Esophagus muscularis mucosa (tissue), 4 donors: ENCODE measurements at regions of chr6 and their contacts with region 1.

Region 1: GRCh38 chr6:31795616-31796298 is at the start of gene VARS1:
- DNase-seq: peak; percentile 95
- H3K4me3 ChIP-seq: peak within 1 kb of the TSS; percentile 92 to 93 (median 93)
- H3K27ac ChIP-seq: peak within 1 kb of the TSS; percentile 92 to 99 (median 95)
- H3K4me1 ChIP-seq: peaks cover 13 to 34% (median 29%) of the 10 kb centered on the region in 4 donors
- H3K27me3 ChIP-seq: no peaks in the 10 kb centered on the region
- CTCF ChIP-seq: peak; percentile 81 to 93 (median 87)
- EP300 ChIP-seq: no peak
- POLR2A ChIP-seq: no peak
- total RNA-seq, gene VARS1: 25.0 to 53.2 (median 34.8) TPM

Region 2: GRCh38 chr6:31597006-31597405 is 198.8 kb before region 1 on chr6:
- intact Hi-C with region 1: no loop called
- DNase-seq: no peak
- H3K4me3 ChIP-seq: no peak overlapping the region
- H3K27ac ChIP-seq: no peak overlapping the region
- H3K4me1 ChIP-seq: peaks cover 0 to 5% (median 0%) of the 10 kb centered on the region in 4 donors
- H3K27me3 ChIP-seq: no peaks in the 10 kb centered on the region
- CTCF ChIP-seq: peak in 2 of 3 experiments; percentile 20 to 23
- EP300 ChIP-seq: no peak
- POLR2A ChIP-seq: no peak

Region 3: DNA sequence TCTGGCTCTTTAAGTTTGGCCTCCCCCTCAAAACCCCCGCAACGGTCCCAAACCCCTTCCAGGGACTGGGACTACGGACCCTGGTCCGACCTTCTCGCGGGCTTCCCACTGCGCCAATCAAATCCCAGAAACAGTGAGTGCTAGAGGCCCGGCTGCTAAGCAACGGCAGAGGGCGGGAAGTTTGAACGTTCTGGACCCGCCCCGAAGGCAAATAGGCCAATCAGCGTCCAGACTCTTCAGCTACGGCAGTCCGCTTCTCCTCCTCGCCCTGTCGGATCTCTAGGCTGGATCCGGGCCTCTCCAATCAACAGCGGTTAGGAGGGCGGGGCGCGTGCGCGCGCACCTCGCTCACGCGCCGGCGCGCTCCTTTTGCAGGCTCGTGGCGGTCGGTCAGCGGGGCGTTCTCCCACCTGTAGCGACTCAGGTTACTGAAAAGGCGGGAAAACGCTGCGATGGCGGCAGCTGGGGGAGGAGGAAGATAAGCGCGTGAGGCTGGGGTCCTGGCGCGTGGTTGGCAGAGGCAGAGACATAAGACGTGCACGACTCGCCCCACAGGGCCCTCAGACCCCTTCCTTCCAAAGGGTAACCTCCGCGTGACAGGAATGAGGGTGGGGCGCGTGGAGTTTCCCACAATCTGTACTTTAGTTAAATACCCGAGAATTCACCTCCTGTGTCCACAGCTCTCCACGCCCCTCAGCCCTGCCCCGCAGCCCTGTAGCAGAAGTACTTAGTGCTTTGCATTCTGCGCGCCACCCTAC is 55.9 kb before region 1 on chr6 and contains the start of gene MSH5:
- intact Hi-C with region 1: loop called (anchors 5 kb)
- DNase-seq: peak; percentile 100
- H3K4me3 ChIP-seq: peak within 1 kb of the TSS; percentile 69 to 78 (median 73)
- H3K27ac ChIP-seq: peak within 1 kb of the TSS; percentile 48 to 90 (median 78)
- H3K4me1 ChIP-seq: peaks cover 29 to 47% (median 43%) of the 10 kb centered on the region in 4 donors
- H3K27me3 ChIP-seq: no peaks in the 10 kb centered on the region
- CTCF ChIP-seq: peak in 1 of 3 experiments; percentile 12
- EP300 ChIP-seq: no peak
- POLR2A ChIP-seq: no peak
- total RNA-seq, gene MSH5: 4.0 to 6.4 (median 4.5) TPM

Region 4: GRCh38 chr6:31776989-31777666 is 18.6 kb before region 1 on chr6 and contains the start of gene VWA7:
- intact Hi-C with region 1: no loop called
- DNase-seq: no peak
- H3K4me3 ChIP-seq: peak within 1 kb of the TSS in 3 of 4 donors; percentile 5 to 14 (median 9)
- H3K27ac ChIP-seq: peak within 1 kb of the TSS in 3 of 4 donors; percentile 28 to 41 (median 33)
- H3K4me1 ChIP-seq: peaks cover 12 to 22% (median 16%) of the 10 kb centered on the region in 4 donors
- H3K27me3 ChIP-seq: no peaks in the 10 kb centered on the region
- CTCF ChIP-seq: no peak
- EP300 ChIP-seq: no peak
- POLR2A ChIP-seq: no peak
- total RNA-seq, gene VWA7: 0.40 to 0.50 (median 0.45) TPM in 3 of 4 donors, not detected in the other